H1 (cell line): ENCODE measurements at regions of chr12 and their contacts with region 1.

Region 1: GRCh38 chr12:130879212-130879686 is 7.4 kb downstream of the RAN start:
- DNase-seq: peak in 1 of 2 experiments; percentile 53
- H3K4me3 ChIP-seq: no peak overlapping the region
- H3K27ac ChIP-seq: peak overlapping the region; percentile 29; the same call in 1 of the 2 replicates
- H3K4me1 ChIP-seq: peaks cover 0 to 2% (median under 1%) of the 10 kb centered on the region in 4 experiments; a peak in 4 of 7 replicates
- H3K27me3 ChIP-seq: no peaks in the 10 kb centered on the region
- CTCF ChIP-seq: no peak
- EP300 ChIP-seq: no peak
- POLR2A ChIP-seq: peak in 1 of 2 experiments; percentile 57; a peak in 1 of 3 replicates
- RAD21 ChIP-seq: no peak

Region 2: DNA sequence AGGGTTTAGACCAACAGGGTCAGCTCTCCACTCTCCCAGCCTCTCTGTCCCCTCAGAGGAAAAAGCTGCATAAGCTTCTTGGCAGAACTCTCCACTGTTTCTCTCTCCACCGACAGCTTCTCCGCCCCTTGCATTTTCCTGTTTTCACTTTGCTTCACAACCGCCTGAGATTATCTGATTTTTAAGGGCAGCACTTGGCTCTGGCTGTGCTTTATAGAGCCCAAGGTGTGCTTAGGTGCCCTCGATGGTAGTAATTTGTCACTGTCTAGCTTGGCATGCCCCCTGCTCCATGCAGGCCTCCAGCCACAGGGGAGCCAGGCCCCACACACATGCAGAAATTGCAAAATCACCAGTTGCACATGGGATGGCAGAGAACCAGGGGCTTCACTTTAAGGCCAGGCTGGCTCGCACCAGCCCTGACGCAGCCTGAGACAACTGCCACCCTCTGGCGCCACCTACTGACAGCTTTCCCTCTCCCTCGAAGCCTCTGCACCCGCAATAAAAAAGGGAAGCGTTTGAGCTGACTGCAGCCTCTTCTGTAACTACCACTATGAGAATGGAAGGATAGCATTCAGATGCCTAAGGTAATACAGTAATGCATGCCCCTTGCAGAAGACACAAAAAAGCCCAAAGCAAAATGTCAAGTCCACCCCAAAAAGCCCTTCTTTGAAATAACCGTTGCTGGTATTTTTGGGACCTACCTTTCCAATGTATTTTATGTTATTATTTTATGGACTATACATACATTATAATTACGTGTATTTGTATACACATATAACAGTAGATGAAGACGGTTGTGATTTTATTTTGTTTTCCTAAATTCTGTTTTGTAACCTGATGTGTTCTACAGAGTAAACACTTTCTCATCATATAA is 131.1 kb before region 1 on chr12:
- CTCF ChIA-PET with region 1: no interaction called
- POLR2A ChIA-PET with region 1: no interaction called
- DNase-seq: peak; percentile 49 to 98
- H3K4me3 ChIP-seq: no peak overlapping the region
- H3K27ac ChIP-seq: no peak overlapping the region
- H3K4me1 ChIP-seq: no peaks in the 10 kb centered on the region; a peak in 1 of 7 replicates
- H3K27me3 ChIP-seq: no peaks in the 10 kb centered on the region
- CTCF ChIP-seq: peak; percentile 88 to 91 (median 90)
- EP300 ChIP-seq: no peak
- POLR2A ChIP-seq: no peak
- RAD21 ChIP-seq: peak; percentile 95 to 98

Region 3: DNA sequence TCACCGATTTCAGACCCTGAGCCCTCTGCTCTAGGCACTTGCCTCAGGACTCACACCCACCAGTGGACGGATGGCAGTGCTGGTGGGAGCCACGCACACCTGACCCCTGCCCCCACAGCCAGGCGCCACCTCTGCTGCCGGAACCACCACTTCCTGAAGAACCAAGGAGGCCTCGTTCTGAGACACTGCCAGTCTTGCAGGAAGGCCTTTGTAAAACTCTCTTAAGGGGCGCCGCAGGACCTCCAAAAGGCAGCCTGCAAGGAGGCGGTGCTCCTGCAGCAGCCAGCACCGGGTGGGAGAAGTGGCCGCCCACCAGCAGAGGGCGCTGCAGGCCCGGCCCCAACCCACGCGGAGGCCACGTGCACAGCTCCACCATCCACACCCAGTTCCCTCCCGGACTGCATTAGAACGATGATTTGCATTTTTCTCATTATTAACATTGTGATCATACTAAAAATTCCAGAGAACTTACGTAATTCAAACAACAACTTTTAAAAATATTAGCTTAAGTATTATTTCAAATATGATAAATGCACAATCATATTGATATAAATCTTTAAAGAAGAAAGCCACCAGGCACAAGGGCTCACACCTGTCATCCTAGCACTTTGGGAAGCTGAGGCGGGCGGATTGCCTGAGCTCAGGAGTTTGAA is 53.0 kb before region 1 on chr12:
- CTCF ChIA-PET with region 1: interaction called, 9 read pairs
- POLR2A ChIA-PET with region 1: interaction called, 14 read pairs
- DNase-seq: peak; percentile 67 to 96
- H3K4me3 ChIP-seq: no peak overlapping the region
- H3K27ac ChIP-seq: no peak overlapping the region
- H3K4me1 ChIP-seq: peaks cover 0 to 16% (median 12%) of the 10 kb centered on the region in 4 experiments; a peak in 6 of 7 replicates
- H3K27me3 ChIP-seq: no peaks in the 10 kb centered on the region
- CTCF ChIP-seq: peak; percentile 95 to 99 (median 96)
- EP300 ChIP-seq: no peak
- POLR2A ChIP-seq: no peak
- RAD21 ChIP-seq: peak; percentile 83 to 85

Region 4: DNA sequence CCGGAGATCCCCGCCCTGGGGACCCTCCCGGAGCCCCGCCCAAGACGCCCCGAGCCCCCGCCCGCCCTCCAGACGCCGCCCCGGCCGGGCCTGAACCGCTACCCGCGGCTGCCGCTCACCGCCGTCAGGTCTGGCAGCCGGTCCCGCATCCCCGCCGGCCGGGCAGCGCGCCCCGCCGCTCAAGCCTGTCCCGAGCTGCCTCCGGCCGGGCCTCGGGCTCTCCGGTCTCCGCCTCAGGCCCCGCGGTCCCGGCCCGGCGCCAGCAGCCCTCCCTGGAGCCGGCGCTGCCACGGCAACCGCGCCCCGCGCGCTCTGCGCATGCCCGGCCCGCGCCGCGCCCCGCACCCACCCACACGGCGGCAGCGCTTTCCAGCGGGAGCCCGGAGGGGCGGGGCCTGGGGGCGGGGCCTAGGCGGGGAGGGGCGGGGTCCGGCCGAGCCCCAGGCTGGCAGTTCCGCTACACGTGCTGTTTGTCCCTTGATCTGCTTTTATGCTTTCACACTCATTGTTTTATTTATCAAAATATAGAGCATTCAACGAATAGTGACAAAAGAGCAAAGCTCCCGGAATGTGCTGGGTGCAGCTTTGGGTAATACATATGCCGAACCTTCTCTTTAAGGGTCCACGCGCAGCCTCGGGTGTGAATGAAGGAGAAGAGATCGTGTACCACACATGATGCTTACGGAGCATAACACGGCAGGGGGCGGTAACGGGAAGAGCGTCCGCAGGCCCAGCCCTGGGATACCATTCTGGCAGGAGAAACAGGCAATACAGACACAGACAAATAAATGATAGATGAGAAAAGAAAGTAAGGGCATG is 40.1 kb before region 1 on chr12 and contains the start of gene STX2:
- CTCF ChIA-PET with region 1: no interaction called
- POLR2A ChIA-PET with region 1: interaction called, 29 read pairs
- DNase-seq: peak in 1 of 2 experiments; percentile 90
- H3K4me3 ChIP-seq: peak within 1 kb of the TSS; percentile 58 to 78 (median 63)
- H3K27ac ChIP-seq: no peak within 1 kb of the TSS
- H3K4me1 ChIP-seq: peaks cover 6 to 14% (median 9%) of the 10 kb centered on the region in 4 experiments; a peak in 6 of 7 replicates
- H3K27me3 ChIP-seq: peaks cover 0 to 15% (median 7%) of the 10 kb centered on the region in 4 experiments; a peak in 5 of 7 replicates
- CTCF ChIP-seq: peak in 2 of 3 experiments; percentile 11 to 25; a peak in 2 of 4 replicates
- EP300 ChIP-seq: no peak
- POLR2A ChIP-seq: no peak
- RAD21 ChIP-seq: 0 out of 4 replicates have a peak, but pooled peaks of 1 of the 2 experiments have one; percentile 3
- total RNA-seq, gene STX2: 22.0 and 26.3 TPM in 2 replicates

Region 5: GRCh38 chr12:130863298-130863697 is 16.0 kb before region 1 on chr12:
- CTCF ChIA-PET with region 1: interaction called, 4 read pairs
- POLR2A ChIA-PET with region 1: interaction called, 86 read pairs
- DNase-seq: no peak
- H3K4me3 ChIP-seq: no peak overlapping the region
- H3K27ac ChIP-seq: no peak overlapping the region
- H3K4me1 ChIP-seq: no peaks in the 10 kb centered on the region
- H3K27me3 ChIP-seq: no peaks in the 10 kb centered on the region
- CTCF ChIP-seq: peak; percentile 23 to 46 (median 37); a peak in 3 of 4 replicates
- EP300 ChIP-seq: no peak
- POLR2A ChIP-seq: no peak
- RAD21 ChIP-seq: no peak

Region 6: GRCh38 chr12:131074221-131075083 is 195.2 kb after region 1 on chr12:
- CTCF ChIA-PET with region 1: no interaction called
- POLR2A ChIA-PET with region 1: no interaction called
- DNase-seq: no peak
- H3K4me3 ChIP-seq: no peak overlapping the region
- H3K27ac ChIP-seq: no peak overlapping the region
- H3K4me1 ChIP-seq: no peaks in the 10 kb centered on the region
- H3K27me3 ChIP-seq: no peaks in the 10 kb centered on the region
- CTCF ChIP-seq: no peak
- EP300 ChIP-seq: no peak
- POLR2A ChIP-seq: no peak
- RAD21 ChIP-seq: no peak